ENCODE measurements at regions of chrX and their contacts with region 1.

Region 1: GRCh38 chrX:47560831-47561652 is at the start of gene ARAF:
- DNase-seq: peak; percentile 98
- H3K4me3 ChIP-seq: peak within 1 kb of the TSS; percentile 54 to 91 (median 80)
- H3K27ac ChIP-seq: peak within 1 kb of the TSS; percentile 84
- H3K4me1 ChIP-seq: peaks cover 10% of the 10 kb centered on the region
- H3K27me3 ChIP-seq: no peaks in the 10 kb centered on the region
- CTCF ChIP-seq: no peak
- POLR2A ChIP-seq: peak; percentile 74
- total RNA-seq, gene ARAF: 58.6 and 62.7 TPM in 2 replicates

Region 2: DNA sequence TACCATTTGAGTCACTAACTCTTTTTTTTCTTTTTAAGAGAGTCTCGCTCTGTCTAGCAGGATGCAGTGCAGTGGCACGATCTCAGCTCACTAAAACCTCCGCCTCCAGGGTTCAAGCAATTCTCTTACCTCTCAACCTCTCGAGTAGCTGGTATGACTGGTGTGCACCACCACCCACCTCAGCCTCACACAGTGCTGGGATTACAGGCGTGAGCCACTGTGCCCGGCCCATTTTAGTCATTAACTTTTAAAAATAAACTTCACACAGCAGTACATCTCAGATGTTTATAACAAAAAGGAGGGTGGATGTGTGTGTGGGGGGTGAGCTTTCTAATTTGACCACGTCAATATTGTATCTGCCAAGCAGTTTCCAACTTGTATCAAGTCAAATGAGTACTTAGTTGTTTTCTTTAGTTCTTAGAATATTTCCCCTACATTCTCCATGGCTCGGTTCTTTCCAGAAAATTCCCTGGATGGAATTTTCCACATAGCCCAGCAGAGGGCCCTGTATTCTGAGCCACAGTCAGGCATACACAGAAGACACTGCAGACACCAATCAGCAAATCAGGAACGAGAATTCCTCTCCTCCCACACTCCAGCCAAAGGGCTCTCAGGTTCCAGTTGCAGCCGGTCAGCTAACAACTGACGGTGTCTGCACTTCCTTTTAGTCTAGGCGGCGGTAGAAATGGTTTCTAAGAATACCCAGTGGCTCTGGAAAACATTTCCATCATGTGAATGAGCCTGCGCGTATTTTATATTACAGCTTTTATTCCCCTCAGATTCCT is 20.1 kb before region 1 on chrX:
- CTCF ChIA-PET with region 1: interaction called, 12 read pairs
- POLR2A ChIA-PET with region 1: no interaction called
- dilution Hi-C with region 1: no loop called
- intact Hi-C with region 1: loop called (anchors 2 kb)
- DNase-seq: peak; percentile 92
- H3K4me3 ChIP-seq: peak overlapping the region in 1 of 3 experiments; percentile 32
- H3K27ac ChIP-seq: peak overlapping the region; percentile 37
- H3K4me1 ChIP-seq: peaks cover 4% of the 10 kb centered on the region
- H3K27me3 ChIP-seq: no peaks in the 10 kb centered on the region
- CTCF ChIP-seq: peak; percentile 47 to 54
- POLR2A ChIP-seq: no peak

Region 3: GRCh38 chrX:47581731-47582647 is 20.9 kb after region 1 on chrX and contains the start of gene TIMP1:
- CTCF ChIA-PET with region 1: interaction called, 4 read pairs
- POLR2A ChIA-PET with region 1: no interaction called
- dilution Hi-C with region 1: no loop called
- intact Hi-C with region 1: loop called (anchors 1 kb)
- DNase-seq: peak; percentile 90
- H3K4me3 ChIP-seq: peak within 1 kb of the TSS; percentile 3 to 60 (median 41)
- H3K27ac ChIP-seq: peak within 1 kb of the TSS; percentile 67
- H3K4me1 ChIP-seq: peaks cover 28% of the 10 kb centered on the region
- H3K27me3 ChIP-seq: no peaks in the 10 kb centered on the region
- CTCF ChIP-seq: no peak
- POLR2A ChIP-seq: peak; percentile 81
- total RNA-seq, gene TIMP1: 104 and 124 TPM in 2 replicates

Region 4: GRCh38 chrX:47619486-47620302 is 58.7 kb after region 1 on chrX and contains the start of gene SYN1:
- CTCF ChIA-PET with region 1: no interaction called
- POLR2A ChIA-PET with region 1: no interaction called
- dilution Hi-C with region 1: no loop called
- intact Hi-C with region 1: loop called (anchors 5 kb)
- DNase-seq: peak; percentile 60
- H3K4me3 ChIP-seq: peak within 1 kb of the TSS in 1 of 3 experiments; percentile 7
- H3K27ac ChIP-seq: no peak within 1 kb of the TSS
- H3K4me1 ChIP-seq: peaks cover 3% of the 10 kb centered on the region
- H3K27me3 ChIP-seq: peaks cover 5 to 8% of the 10 kb centered on the region in 2 experiments
- CTCF ChIP-seq: no peak
- POLR2A ChIP-seq: no peak
- total RNA-seq, gene SYN1: not detected in 2 replicates

Region 5: GRCh38 chrX:47637546-47638195 is 76.6 kb after region 1 on chrX:
- CTCF ChIA-PET with region 1: interaction called, 4 read pairs
- POLR2A ChIA-PET with region 1: no interaction called
- dilution Hi-C with region 1: no loop called
- intact Hi-C with region 1: loop called (anchors 1 kb)
- DNase-seq: peak; percentile 86
- H3K4me3 ChIP-seq: peak overlapping the region; percentile 3 to 44 (median 35)
- H3K27ac ChIP-seq: no peak overlapping the region
- H3K4me1 ChIP-seq: no peaks in the 10 kb centered on the region
- H3K27me3 ChIP-seq: no peaks in the 10 kb centered on the region
- CTCF ChIP-seq: peak; percentile 34 to 56
- POLR2A ChIP-seq: no peak

Region 6: GRCh38 chrX:47644557-47645091 is 83.6 kb after region 1 on chrX:
- CTCF ChIA-PET with region 1: interaction called, 9 read pairs
- POLR2A ChIA-PET with region 1: no interaction called
- dilution Hi-C with region 1: no loop called
- intact Hi-C with region 1: loop called (anchors 1 kb)
- DNase-seq: no peak
- H3K4me3 ChIP-seq: no peak overlapping the region
- H3K27ac ChIP-seq: no peak overlapping the region
- H3K4me1 ChIP-seq: peaks cover 9% of the 10 kb centered on the region
- H3K27me3 ChIP-seq: no peaks in the 10 kb centered on the region
- CTCF ChIP-seq: peak; percentile 21 to 42
- POLR2A ChIP-seq: no peak

Region 7: DNA sequence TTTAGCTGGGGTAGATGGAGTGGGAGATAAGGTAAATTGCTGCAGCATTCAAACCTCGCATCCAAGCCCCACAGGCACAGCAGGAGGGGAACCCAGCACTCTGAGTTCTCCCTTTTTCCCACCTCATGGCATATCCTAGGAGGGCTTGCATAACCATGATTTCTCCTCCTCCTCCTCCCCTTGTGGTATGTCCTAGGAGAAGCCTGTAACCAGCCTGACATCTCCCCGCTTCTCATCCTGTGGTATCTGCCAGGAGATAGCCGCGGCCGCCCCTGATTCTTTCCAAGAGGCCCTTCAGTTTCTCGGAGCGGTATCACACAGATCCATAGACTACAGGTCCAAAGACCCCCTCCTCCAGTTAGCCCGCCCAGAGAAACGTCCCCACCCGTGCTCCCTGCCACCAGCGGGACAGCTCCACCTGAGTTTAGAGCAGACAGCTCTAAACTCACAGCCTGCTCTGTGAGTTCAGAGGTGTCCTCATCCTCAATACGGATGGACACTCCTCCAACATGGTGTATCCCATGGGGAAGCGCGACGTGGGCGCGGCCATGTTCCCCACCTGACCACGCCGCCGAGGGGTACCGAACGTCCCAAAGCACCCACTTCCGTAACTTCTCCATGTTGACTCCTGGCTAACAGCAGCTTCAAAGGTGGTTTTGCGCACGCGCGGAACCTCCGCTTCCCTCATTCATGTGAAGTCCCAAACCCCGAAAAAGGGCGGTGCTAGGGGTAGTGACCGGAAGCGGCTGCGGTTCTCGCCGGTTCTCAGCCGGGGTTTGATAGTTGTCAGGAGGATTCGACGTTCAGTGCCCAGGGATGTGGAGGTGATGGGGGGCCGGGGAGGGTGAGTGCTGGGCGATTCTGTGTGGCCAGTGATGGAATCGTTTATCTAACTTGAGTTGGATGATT is 275.4 kb after region 1 on chrX and contains the start of gene ZNF81:
- CTCF ChIA-PET with region 1: no interaction called
- POLR2A ChIA-PET with region 1: no interaction called
- dilution Hi-C with region 1: no loop called
- intact Hi-C with region 1: loop called (anchors 5 kb)
- DNase-seq: peak; percentile 95
- H3K4me3 ChIP-seq: peak within 1 kb of the TSS; percentile 62 to 91 (median 67)
- H3K27ac ChIP-seq: peak within 1 kb of the TSS; percentile 55
- H3K4me1 ChIP-seq: peaks cover 4% of the 10 kb centered on the region
- H3K27me3 ChIP-seq: no peaks in the 10 kb centered on the region
- CTCF ChIP-seq: no peak
- POLR2A ChIP-seq: peak; percentile 54
- total RNA-seq, gene ZNF81: 6.4 and 9.6 TPM in 2 replicates

Measured in endothelial cell of umbilical vein (primary cell).